ENCODE measurements at regions of chr5 and their contacts with region 1.

Region 1: GRCh38 chr5:31186672-31187267 is 6.7 kb upstream of the CDH6 start:
- DNase-seq: peak; percentile 24
- H3K4me3 ChIP-seq: no peak overlapping the region
- H3K27ac ChIP-seq: no peak overlapping the region
- H3K27me3 ChIP-seq: no peaks in the 10 kb centered on the region
- CTCF ChIP-seq: peak; percentile 79

Region 2: DNA sequence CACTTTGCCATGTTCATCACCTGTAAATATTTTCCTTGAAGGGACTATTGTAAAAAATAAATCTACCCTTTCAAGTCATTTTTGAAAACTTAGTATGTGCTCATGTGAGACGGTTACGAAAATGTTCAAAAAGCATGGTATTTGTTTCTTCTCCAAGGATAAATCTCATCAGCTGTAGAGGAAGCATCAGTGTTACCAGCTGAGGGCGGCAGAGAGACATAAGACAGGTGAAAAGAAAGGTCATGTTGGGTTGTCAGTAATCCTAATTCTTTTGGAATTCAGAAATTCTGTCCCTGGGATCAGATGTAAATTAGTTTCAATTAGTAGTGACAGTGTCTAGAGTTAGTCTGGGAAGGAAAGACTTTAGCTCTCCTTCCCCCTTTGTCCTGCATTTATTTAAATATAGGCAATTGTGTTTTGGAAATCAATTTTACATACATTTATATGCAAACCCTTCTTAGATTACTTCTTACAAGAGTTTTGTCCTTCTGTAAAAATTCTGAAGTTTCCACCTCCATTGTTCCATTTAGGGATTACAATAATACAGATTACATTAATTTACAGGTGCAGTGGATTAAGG is 785.2 kb before region 1 on chr5:
- CTCF ChIA-PET with region 1: interaction called, 13 read pairs
- POLR2A ChIA-PET with region 1: no interaction called
- DNase-seq: peak; percentile 7
- H3K4me3 ChIP-seq: no peak overlapping the region
- H3K27ac ChIP-seq: no peak overlapping the region
- H3K27me3 ChIP-seq: no peaks in the 10 kb centered on the region
- CTCF ChIP-seq: peak; percentile 66

Region 3: GRCh38 chr5:30932273-30933020 is 254.3 kb before region 1 on chr5:
- CTCF ChIA-PET with region 1: interaction called, 11 read pairs
- POLR2A ChIA-PET with region 1: no interaction called
- DNase-seq: no peak
- H3K4me3 ChIP-seq: no peak overlapping the region
- H3K27ac ChIP-seq: no peak overlapping the region
- H3K27me3 ChIP-seq: no peaks in the 10 kb centered on the region
- CTCF ChIP-seq: no peak

Region 4: DNA sequence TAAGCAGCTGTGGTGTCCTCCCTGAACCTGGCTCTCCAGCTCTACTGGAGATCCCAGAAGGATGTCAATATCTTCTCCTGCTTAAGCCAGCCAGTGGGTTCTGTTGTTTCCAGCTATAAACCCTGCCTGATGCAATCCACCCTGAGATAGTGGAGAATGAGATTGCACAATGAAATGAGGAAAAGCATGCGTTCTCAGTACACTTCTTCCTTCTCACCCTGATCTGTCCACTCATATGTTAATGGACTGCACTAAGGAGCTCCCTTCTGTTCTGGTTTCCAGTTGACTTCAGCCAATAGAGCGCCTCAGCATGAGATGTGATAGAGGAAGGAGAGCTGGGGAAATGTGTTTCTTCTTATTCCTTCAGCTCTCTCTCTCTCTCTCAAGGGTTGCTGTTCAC is 33.2 kb before region 1 on chr5:
- CTCF ChIA-PET with region 1: interaction called, 18 read pairs
- POLR2A ChIA-PET with region 1: no interaction called
- DNase-seq: no peak
- H3K4me3 ChIP-seq: no peak overlapping the region
- H3K27ac ChIP-seq: peak overlapping the region; percentile 31
- H3K27me3 ChIP-seq: no peaks in the 10 kb centered on the region
- CTCF ChIP-seq: no peak

Region 5: DNA sequence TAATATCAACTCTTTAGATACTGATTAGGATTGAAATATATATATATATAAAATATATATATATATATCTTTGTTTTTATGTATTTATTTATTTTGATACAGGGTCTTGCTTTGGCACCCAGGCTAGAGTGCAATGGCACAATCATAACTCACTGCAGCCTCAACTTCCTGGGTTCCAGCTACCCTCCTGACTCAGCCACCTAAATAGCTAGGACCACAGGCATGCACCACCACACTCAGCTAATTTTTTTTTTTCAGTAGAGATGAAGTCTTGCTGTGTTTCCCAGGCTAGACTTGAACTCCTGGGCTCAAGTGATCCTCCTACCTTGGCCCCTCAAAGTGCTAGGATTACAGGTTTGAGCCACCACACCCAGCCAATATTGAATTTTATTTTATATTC is 13.9 kb before region 1 on chr5:
- CTCF ChIA-PET with region 1: interaction called, 18 read pairs
- POLR2A ChIA-PET with region 1: no interaction called
- DNase-seq: no peak
- H3K4me3 ChIP-seq: no peak overlapping the region
- H3K27ac ChIP-seq: no peak overlapping the region
- H3K27me3 ChIP-seq: no peaks in the 10 kb centered on the region
- CTCF ChIP-seq: no peak

Measured in AG04450 (cell line).